ENCODE measurements at regions of chr17 and their contacts with region 1.

Region 1: DNA sequence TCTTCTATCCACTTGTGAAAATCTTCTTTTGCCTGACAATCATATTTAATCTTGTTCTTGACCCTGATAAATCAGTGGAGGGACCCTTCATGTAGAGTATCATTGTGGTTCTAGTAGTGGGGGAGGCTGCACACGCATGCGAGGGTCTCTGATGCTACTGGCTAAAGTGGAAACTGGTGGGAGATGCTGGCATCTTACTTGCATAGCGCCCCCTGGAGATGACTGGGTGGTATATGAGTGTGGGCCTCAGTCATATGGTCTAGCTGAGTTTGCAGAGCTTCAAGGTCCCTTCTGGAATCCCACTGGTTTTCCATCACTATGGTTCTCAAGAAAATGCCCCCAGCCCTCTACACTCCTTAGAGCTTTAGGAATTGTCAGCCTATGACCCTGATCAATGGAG is 236.4 kb upstream of the AXIN2 start:
- DNase-seq: no peak

Region 2: DNA sequence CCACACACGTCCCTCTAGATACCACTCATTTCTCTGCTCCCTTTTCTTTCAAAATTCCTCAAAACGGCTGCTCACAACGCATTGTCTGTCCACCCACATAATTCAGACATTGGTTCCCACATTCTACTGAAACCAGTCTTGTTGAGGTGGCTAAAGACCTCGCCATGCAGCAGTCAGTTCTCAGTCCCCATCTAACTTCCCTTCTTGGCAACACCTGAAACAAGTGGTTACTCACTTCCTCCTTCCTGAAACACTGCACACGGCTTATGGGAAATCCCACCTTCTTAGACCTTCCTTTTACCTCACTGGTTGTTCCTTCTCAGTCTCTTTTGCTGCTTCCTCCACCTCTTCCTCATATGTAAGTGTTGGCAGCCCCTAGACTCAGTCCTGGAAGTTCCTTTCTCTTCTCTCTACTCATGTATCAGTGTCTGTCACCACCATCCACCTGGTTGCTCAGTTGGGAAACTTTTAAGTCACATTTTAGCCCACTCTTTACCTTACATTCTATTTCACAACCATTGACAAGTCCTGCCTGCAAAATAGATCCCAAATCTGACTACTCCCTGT is 117.1 kb after region 1 on chr17:
- intact Hi-C with region 1: no loop called
- DNase-seq: no peak

Region 3: GRCh38 chr17:66555605-66556004 is 757.8 kb after region 1 on chr17:
- intact Hi-C with region 1: loop called in 1 of 2 experiments (anchors 5 kb)
- DNase-seq: no peak

Measured in posterior vena cava (tissue), 2 donors.